ENCODE measurements at regions of chr1 and their contacts with region 1.

Region 1: DNA sequence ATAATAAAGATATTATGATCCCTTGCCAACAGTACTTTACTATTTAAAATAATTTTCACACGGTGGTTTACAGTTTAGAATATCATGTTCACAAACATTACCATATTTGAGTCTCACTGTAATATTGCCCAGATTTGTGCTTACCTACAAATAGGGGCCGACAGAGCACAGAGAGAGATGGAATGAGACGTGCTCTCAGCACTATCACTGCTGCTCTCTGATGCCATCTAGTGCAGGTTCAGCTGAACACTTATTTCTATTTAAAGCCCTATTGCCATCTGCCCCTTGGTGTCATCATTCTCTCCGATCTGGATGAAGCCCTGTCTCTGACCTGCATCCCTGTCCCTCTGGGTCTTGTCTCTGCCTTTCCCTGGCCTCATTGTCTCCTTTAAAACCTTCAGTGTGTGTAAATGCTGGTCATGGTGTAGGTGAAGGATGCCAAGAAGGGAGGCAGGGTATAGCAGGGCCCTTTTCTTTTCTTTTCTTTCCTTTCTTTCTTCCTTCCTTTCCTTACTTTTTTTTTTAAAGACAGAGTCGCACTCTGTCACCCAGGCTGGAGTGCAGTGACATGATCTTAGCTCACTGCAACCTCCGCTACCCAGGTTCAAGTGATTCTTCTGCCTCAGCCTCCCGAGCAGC is 6.9 kb upstream of the GPATCH4 start:
- DNase-seq: peak; percentile 78
- H3K4me3 ChIP-seq: no peak overlapping the region
- H3K27ac ChIP-seq: no peak overlapping the region
- H3K4me1 ChIP-seq: no peaks in the 10 kb centered on the region
- H3K27me3 ChIP-seq: peaks cover 6 to 9% of the 10 kb centered on the region in 2 experiments
- CTCF ChIP-seq: peak; percentile 71 to 78
- POLR2A ChIP-seq: no peak

Region 2: GRCh38 chr1:156445789-156446263 is 162.3 kb before region 1 on chr1:
- CTCF ChIA-PET with region 1: interaction called, 18 read pairs
- POLR2A ChIA-PET with region 1: no interaction called
- dilution Hi-C with region 1: no loop called
- intact Hi-C with region 1: no loop called
- DNase-seq: peak; percentile 77
- H3K4me3 ChIP-seq: no peak overlapping the region
- H3K27ac ChIP-seq: no peak overlapping the region
- H3K4me1 ChIP-seq: no peaks in the 10 kb centered on the region
- H3K27me3 ChIP-seq: peaks cover 39 to 46% of the 10 kb centered on the region in 2 experiments
- CTCF ChIP-seq: peak; percentile 89 to 95
- POLR2A ChIP-seq: no peak

Region 3: DNA sequence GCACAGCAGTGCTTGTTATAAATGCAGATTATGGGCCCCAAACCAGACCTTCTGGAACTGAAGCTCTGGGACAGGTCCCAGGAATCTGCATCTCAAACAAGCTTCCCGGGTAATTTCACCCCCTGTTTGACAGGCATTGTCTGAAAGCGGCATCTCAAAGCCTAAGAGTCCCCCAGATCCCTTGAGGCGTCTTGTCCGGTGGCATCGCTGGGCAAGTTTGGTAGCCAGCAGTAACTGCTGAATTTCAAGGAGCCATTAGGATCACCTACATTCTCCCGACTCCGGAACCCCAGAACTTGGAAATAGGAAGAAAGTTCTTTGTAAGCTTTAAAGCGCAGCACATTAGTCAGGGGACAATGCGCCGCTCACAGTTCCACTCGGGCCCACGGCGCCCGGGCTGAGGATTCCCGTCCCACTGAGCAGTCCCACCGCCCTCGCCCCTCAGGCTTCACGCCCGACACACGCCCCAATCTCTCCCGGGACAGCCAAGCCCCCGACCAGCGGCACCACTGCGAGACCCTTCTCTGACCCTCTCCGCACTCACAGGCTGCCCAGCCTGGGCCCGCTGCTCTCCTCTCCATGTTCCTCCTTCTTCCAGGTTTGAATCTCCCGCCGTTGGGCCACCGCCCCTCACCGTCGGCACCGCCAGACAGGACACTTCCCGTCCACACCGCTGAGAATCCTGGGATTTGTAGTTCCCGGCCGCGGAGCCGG is 36.0 kb before region 1 on chr1 and contains the start of gene IQGAP3:
- CTCF ChIA-PET with region 1: interaction called, 3 read pairs
- POLR2A ChIA-PET with region 1: no interaction called
- dilution Hi-C with region 1: no loop called
- intact Hi-C with region 1: loop called (anchors 5 kb)
- DNase-seq: peak; percentile 73
- H3K4me3 ChIP-seq: peak within 1 kb of the TSS; percentile 66 to 71 (median 68)
- H3K27ac ChIP-seq: peak within 1 kb of the TSS; percentile 61
- H3K4me1 ChIP-seq: peaks cover 13% of the 10 kb centered on the region
- H3K27me3 ChIP-seq: peaks cover 3 to 6% of the 10 kb centered on the region in 2 experiments
- CTCF ChIP-seq: no peak
- POLR2A ChIP-seq: no peak
- total RNA-seq, gene IQGAP3: 48.6 and 60.7 TPM in 2 replicates

Region 4: DNA sequence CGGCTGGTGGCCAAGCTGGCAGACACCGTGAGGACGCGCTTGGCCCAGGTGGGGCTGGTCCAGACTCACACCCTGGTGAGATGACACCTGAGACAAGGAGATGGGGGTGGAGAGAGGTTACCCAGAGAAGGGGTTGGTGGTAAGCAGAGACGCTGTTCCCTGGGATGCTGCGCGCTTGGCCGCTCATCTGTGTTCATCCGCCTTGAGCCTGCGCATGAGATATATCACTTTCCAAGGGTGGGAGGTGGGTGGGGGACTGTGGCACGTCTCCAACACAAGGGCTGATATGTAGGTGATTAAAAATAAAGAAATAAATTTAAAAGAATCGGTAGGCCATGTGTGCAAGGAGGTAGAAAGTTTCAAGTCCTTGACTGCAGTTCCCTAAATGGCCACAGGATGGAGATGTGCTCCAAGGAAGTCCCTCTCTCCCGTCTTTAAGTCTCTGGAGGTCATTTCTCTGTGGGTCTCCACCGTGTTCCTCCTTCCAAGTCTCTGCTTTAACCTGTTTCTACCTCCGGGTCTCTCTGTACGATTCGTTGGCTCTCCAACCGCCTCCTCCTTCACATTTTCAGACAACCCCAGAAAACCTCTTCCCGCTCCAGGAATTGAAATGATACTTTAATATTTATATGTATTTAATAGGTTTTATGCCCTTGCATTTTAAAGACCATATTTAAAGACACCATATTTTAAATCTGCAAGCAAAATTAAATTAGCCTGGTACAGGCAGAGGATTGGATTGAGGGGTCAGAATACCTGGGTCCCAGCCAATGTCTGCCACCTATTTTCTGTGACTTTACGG is 24.1 kb before region 1 on chr1:
- CTCF ChIA-PET with region 1: interaction called, 104 read pairs
- POLR2A ChIA-PET with region 1: no interaction called
- dilution Hi-C with region 1: no loop called
- intact Hi-C with region 1: loop called (anchors 1 kb)
- DNase-seq: peak; percentile 82
- H3K4me3 ChIP-seq: no peak overlapping the region
- H3K27ac ChIP-seq: no peak overlapping the region
- H3K4me1 ChIP-seq: no peaks in the 10 kb centered on the region
- H3K27me3 ChIP-seq: no peaks in the 10 kb centered on the region
- CTCF ChIP-seq: peak; percentile 68 to 90
- POLR2A ChIP-seq: no peak

Region 5: GRCh38 chr1:156618853-156619581 is 10.9 kb after region 1 on chr1 and contains the start of gene HAPLN2:
- CTCF ChIA-PET with region 1: interaction called, 27 read pairs
- POLR2A ChIA-PET with region 1: interaction called, 5 read pairs
- dilution Hi-C with region 1: no loop called
- intact Hi-C with region 1: no loop called
- DNase-seq: peak; percentile 20
- H3K4me3 ChIP-seq: no peak within 1 kb of the TSS
- H3K27ac ChIP-seq: no peak within 1 kb of the TSS
- H3K4me1 ChIP-seq: peaks cover 8% of the 10 kb centered on the region
- H3K27me3 ChIP-seq: peaks cover 32 to 43% of the 10 kb centered on the region in 2 experiments
- CTCF ChIP-seq: peak; percentile 23 to 56
- POLR2A ChIP-seq: no peak
- total RNA-seq, gene HAPLN2: not detected in 2 replicates

Region 6: DNA sequence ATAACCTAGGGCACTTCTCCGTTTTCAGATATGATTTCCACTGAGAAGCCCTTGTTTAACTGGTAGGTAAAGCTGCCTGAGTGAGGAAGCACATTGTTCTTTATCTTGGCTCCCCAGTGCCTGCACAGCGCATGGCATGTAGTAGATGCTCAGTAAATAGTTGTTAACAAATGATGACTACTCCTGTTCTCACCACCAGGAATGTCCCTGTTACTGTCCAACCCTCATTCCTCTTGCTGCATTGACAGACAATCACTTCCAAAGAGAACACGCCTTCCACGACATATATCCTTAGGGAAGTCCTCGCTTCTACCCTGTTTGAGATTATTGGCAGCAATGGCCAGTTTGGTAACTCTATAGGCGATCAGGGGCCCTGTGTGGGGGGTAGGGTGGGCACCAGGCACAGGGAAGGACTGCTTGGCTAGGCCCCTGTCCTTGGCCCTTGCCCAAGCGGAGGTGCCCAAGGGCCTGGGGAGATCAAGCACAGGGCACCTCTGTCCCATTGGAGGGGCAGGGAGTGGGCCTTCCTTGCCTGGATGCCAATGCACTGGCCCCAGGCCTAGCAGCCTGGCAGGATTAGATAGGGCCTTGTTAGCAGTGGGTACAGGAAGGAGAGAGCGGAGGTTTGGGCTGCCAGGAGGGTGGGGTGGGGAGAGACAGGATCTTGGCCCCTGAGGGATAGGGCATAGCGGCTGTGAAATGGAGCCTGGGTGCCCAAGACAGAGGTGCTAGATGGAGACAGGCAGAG is 58.9 kb after region 1 on chr1:
- CTCF ChIA-PET with region 1: no interaction called
- POLR2A ChIA-PET with region 1: interaction called, 12 read pairs
- dilution Hi-C with region 1: no loop called
- intact Hi-C with region 1: no loop called
- DNase-seq: no peak
- H3K4me3 ChIP-seq: no peak overlapping the region
- H3K27ac ChIP-seq: no peak overlapping the region
- H3K4me1 ChIP-seq: peaks cover 33% of the 10 kb centered on the region
- H3K27me3 ChIP-seq: no peaks in the 10 kb centered on the region
- CTCF ChIP-seq: no peak
- POLR2A ChIP-seq: no peak

Region 7: GRCh38 chr1:156884560-156885184 is 276.5 kb after region 1 on chr1:
- CTCF ChIA-PET with region 1: no interaction called
- POLR2A ChIA-PET with region 1: no interaction called
- dilution Hi-C with region 1: no loop called
- intact Hi-C with region 1: no loop called
- DNase-seq: no peak
- H3K4me3 ChIP-seq: no peak overlapping the region
- H3K27ac ChIP-seq: no peak overlapping the region
- H3K4me1 ChIP-seq: peaks cover 2% of the 10 kb centered on the region
- H3K27me3 ChIP-seq: peaks cover 5 to 22% of the 10 kb centered on the region in 2 experiments
- CTCF ChIP-seq: no peak
- POLR2A ChIP-seq: no peak